Left cardiac atrium (tissue), 4 donors: ENCODE measurements at regions of chr15 and their contacts with region 1.

Region 1: DNA sequence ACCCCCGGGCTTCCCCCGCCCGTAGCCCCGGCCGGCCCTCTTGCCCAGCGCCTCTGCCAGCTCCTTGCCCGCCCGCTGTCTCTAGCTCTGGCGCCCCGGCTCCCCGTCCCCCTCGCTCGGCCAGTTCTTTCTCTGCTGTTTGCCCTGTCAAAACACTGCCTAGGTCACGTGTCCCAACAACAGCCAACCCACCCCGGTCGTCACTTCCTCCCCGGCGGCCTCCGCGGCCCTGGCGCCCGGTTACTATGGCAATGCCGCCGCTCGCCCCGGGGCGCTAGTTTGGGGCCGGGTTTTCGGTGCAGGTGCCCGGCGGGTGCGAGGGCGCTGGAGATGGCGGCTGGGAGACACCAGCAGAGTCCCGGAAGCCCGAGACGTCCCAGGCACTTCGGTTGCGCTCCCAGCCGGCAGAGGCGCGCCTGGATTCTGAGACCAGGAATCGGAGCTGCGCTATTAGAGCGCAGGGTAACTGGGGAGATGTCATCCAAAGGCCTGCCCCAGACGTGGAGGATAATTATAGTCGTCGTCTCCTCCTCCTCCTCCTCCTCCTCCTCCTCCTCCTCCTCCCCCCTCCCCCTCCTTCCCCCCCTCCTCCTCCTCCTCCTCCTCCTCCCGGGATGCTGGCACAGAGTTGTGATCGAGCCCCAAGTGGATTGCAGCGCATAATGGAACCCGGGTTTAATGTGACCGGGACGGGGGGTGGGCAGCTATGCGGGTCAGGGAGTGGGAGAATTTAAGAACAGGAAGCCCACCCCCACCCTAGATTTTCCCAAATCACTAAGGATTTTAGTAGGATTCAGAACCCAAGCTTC is at the start of gene ATOSA:
- DNase-seq: peak; percentile 93
- ATAC-seq: peak; percentile 95 to 97
- total RNA-seq, gene ATOSA: 24.9 to 27.6 TPM

Region 2: DNA sequence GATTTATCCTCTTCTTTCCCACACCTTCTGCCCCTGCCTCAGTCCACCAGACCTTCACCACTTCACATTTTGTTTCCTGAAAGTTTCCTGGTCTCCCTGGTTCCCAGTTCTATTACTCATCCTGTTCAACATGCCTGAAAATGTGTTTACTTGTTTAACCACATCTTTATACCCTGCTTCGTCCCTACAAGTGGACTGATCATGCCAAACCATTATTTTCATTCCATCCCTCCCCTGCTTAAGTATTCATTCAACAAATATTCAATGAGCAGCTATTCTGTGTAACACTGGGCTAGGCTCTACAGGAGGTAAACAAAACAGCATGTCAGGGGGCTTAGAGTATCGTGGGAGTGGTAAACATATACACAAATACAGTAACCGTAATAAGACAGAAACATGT is 156.2 kb before region 1 on chr15:
- intact Hi-C with region 1: no loop called
- DNase-seq: no peak
- ATAC-seq: no peak

Region 3: DNA sequence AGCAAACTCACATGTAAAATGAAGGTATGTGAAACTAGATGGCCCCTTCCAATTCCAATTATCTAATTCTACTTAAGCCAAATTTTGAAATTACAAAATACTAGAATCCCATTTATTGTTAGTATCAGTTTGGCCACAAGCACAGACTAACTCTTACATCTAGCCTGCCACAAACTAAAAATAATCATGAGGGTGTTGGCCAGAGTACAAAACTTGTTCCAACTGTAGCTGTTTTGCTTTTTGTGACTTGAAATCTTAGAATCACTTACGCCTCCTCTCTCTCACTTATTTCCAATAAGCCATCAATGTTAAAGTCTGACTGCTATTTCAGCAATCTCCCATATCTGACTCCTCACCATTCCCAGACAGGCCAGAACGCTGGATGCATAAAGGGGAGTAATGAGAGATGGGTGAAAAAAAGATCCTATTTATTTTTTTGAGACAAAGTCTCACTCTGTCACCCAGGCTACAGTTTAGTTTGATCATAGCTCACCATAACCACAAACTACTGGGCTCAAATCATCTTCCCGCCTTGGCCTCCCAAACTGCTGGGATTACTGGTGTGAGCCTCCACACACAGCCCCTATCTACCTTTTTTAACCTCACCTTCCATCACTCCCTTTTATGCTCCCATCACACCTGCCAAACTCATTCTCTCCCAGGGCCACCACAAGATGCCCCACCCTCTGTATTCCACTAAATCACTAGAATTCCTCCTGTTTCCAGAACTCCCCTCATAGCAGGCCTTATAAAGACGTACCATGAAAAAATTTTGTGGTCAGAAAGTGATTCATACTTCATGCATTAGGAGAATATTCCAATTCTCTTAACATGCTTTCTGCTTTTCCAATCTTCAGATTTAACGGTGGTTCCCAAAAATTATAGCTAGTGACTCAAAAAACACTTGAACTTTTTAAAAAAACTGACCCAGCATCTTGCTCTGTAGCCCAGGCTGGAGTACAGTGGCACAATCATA is 36.8 kb before region 1 on chr15:
- intact Hi-C with region 1: loop called in 1 of 2 experiments (anchors 5 kb)
- DNase-seq: no peak
- ATAC-seq: peak; percentile 44 to 61

Region 4: GRCh38 chr15:52730173-52730572 is 50.7 kb after region 1 on chr15:
- intact Hi-C with region 1: loop called in 1 of 2 experiments (anchors 5 kb)
- DNase-seq: no peak
- ATAC-seq: no peak